Heart right ventricle (tissue), 16 donors: ENCODE measurements at regions of chr7 and their contacts with region 1.

Region 1: DNA sequence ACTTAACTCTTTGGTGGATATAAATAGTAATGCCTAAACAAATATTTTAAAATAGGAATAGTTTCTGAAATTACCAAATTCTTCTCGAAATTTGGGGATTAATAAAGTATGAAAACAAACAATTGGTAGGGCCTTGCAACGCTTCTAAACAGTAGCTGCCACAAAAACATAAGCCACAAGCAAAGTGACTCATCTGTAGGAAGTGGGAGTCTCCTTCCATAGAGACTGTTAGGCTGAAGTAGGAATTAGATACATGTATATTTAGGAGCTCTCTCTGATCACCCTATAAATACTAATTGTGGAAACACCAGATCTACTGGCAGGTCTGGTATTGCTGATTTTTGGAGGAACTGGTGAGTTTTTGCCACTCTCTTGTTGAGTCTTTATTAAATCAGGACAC is 5.7 kb upstream of the LMOD2 start:
- DNase-seq: no peak
- ATAC-seq: no peak
- H3K4me3 ChIP-seq: no peak overlapping the region
- H3K27ac ChIP-seq: peak overlapping the region in 5 of 10 donors; percentile 13 to 69 (median 65)
- H3K4me1 ChIP-seq: peaks cover 0 to 69% (median 30%) of the 10 kb centered on the region in 9 donors
- H3K27me3 ChIP-seq: no peaks in the 10 kb centered on the region
- CTCF ChIP-seq: no peak

Region 2: GRCh38 chr7:122790132-122790531 is 859.8 kb before region 1 on chr7:
- intact Hi-C with region 1: loop called in 1 of 10 experiments (anchors 10 kb)
- DNase-seq: no peak
- ATAC-seq: no peak
- H3K4me3 ChIP-seq: no peak overlapping the region
- H3K27ac ChIP-seq: no peak overlapping the region
- H3K4me1 ChIP-seq: no peaks in the 10 kb centered on the region
- H3K27me3 ChIP-seq: no peaks in the 10 kb centered on the region
- CTCF ChIP-seq: no peak

Region 3: GRCh38 chr7:123784263-123784662 is 134.3 kb after region 1 on chr7:
- intact Hi-C with region 1: no loop called
- DNase-seq: no peak
- ATAC-seq: peak in 7 of 8 donors; percentile 72 to 91 (median 86)
- H3K4me3 ChIP-seq: no peak overlapping the region
- H3K27ac ChIP-seq: peak overlapping the region in 2 of 10 donors; percentile 8 to 50
- H3K4me1 ChIP-seq: peaks cover 0 to 8% (median 0%) of the 10 kb centered on the region in 9 donors
- H3K27me3 ChIP-seq: no peaks in the 10 kb centered on the region
- CTCF ChIP-seq: no peak